Activated CD4-positive, alpha-beta T cell treated with anti-CD3 and anti-CD28 coated beads, Interleukin-2, amount 10 ng/mL, durations not matched to agents 7 days and 5 days (primary cell): ENCODE measurements at regions of chr17 and their contacts with region 1.

Region 1: GRCh38 chr17:59786536-59787319 is 79.3 kb downstream of the VMP1 start:
- DNase-seq: peak; percentile 92
- H3K4me3 Mint-ChIP-seq: peak overlapping the region; percentile 73
- H3K27ac Mint-ChIP-seq: peak overlapping the region; percentile 93
- H3K4me1 Mint-ChIP-seq: peaks cover 63% of the 10 kb centered on the region
- H3K27me3 Mint-ChIP-seq: no peaks in the 10 kb centered on the region

Region 2: DNA sequence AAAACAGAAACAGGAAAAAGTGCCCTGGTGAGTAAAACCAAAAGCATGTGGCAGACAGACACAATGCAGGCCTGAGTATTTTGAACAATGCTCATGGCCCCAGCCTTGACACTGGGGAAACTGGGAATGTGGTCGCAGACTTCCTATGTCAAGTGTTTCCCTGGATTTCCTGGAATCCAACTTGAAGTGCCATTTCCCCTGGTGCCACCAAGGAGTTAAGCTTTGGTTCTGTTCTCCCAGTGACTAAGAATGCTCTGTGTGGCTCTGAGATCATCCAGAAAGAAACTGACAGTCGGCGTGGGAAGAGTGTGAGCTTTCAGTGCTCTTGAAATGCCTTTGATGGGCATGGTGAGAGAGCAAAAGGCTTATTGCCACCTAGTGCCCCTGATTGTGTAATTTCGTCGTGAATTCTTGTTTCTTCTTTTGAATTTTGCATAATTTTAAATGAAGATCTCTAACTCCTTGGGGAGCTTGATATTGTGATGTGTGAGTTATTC is 359.3 kb before region 1 on chr17:
- CTCF ChIA-PET with region 1: no interaction called
- POLR2A ChIA-PET with region 1: no interaction called
- DNase-seq: peak; percentile 18
- H3K4me3 Mint-ChIP-seq: no peak overlapping the region
- H3K27ac Mint-ChIP-seq: no peak overlapping the region
- H3K4me1 Mint-ChIP-seq: peaks cover 18% of the 10 kb centered on the region
- H3K27me3 Mint-ChIP-seq: peaks cover 4% of the 10 kb centered on the region

Region 3: GRCh38 chr17:59769891-59770290 is 16.8 kb before region 1 on chr17:
- CTCF ChIA-PET with region 1: interaction called, 18 read pairs
- POLR2A ChIA-PET with region 1: interaction called, 4 read pairs
- DNase-seq: no peak
- H3K4me3 Mint-ChIP-seq: no peak overlapping the region
- H3K27ac Mint-ChIP-seq: no peak overlapping the region
- H3K4me1 Mint-ChIP-seq: peaks cover 36% of the 10 kb centered on the region
- H3K27me3 Mint-ChIP-seq: no peaks in the 10 kb centered on the region

Region 4: DNA sequence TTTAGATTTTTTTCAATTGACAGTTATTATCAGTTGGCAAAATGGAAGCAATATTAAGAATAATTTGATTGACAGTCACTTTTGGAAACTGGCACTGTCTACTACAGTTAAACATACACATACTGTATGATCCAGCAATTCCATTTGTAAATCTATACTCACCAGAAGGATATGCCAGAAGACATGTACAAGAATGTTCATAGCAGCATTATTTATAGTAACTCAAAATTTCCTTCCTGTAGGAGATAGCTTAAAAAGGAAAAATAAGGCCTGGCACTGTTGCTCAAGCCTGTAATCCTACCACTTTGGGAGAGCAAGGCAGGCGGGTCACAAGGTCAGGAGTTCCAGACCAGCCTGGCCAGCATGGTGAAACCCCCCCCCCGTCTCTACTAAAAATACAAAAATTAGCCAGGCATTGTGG is 10.1 kb after region 1 on chr17:
- CTCF ChIA-PET with region 1: interaction called, 13 read pairs
- POLR2A ChIA-PET with region 1: no interaction called
- DNase-seq: no peak
- H3K4me3 Mint-ChIP-seq: no peak overlapping the region
- H3K27ac Mint-ChIP-seq: peak overlapping the region; percentile 36
- H3K4me1 Mint-ChIP-seq: peaks cover 32% of the 10 kb centered on the region
- H3K27me3 Mint-ChIP-seq: no peaks in the 10 kb centered on the region

Region 5: GRCh38 chr17:59829217-59830006 is 42.7 kb after region 1 on chr17:
- CTCF ChIA-PET with region 1: interaction called, 7 read pairs
- POLR2A ChIA-PET with region 1: interaction called, 27 read pairs
- DNase-seq: peak; percentile 59
- H3K4me3 Mint-ChIP-seq: peak overlapping the region; percentile 71
- H3K27ac Mint-ChIP-seq: peak overlapping the region; percentile 96
- H3K4me1 Mint-ChIP-seq: peaks cover 83% of the 10 kb centered on the region
- H3K27me3 Mint-ChIP-seq: no peaks in the 10 kb centered on the region

Region 6: DNA sequence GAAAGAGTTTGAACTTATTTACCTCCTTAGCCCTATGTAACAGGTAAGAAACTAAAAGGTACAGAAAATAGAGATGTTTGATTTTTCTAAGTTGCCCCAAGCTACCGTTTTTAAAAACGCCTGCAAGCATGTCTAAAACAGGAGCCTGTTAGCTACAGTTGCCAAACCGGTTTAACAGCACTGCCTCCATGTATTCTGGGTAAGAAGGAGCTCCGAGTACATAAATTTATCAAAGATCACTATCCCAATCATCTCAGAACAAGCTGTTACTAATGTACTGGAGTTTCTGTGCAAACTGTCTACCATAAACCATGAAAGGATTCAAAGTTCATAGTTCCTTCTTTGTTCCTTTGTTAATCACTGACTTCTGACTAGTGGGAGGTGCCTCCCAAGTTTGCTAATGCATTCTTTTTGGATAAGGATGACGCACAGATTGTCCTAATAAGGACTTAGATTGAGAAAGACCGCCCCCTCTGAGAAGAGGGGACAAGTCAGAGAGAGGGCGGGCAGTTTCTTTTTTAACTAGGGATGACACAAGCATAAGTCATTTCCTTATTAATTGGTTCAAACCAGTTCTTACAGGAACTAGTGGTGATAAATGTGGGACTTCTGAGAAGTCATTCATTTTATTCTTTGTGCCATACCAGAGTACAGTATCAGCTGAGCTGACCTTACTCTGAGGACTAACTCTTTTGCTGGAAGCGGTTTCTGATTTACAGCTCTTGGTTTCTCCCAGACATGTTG is 50.8 kb after region 1 on chr17:
- CTCF ChIA-PET with region 1: interaction called, 15 read pairs
- POLR2A ChIA-PET with region 1: interaction called, 120 read pairs
- DNase-seq: peak; percentile 91
- H3K4me3 Mint-ChIP-seq: peak overlapping the region; percentile 93
- H3K27ac Mint-ChIP-seq: peak overlapping the region; percentile 98
- H3K4me1 Mint-ChIP-seq: peaks cover 45% of the 10 kb centered on the region
- H3K27me3 Mint-ChIP-seq: no peaks in the 10 kb centered on the region

Region 7: GRCh38 chr17:59863606-59864005 is 76.9 kb after region 1 on chr17:
- CTCF ChIA-PET with region 1: no interaction called
- POLR2A ChIA-PET with region 1: no interaction called
- DNase-seq: no peak
- H3K4me3 Mint-ChIP-seq: no peak overlapping the region
- H3K27ac Mint-ChIP-seq: no peak overlapping the region
- H3K4me1 Mint-ChIP-seq: peaks cover 10% of the 10 kb centered on the region
- H3K27me3 Mint-ChIP-seq: no peaks in the 10 kb centered on the region

Region 8: GRCh38 chr17:59954856-59955255 is 168.1 kb after region 1 on chr17:
- CTCF ChIA-PET with region 1: no interaction called
- POLR2A ChIA-PET with region 1: no interaction called
- DNase-seq: no peak
- H3K4me3 Mint-ChIP-seq: no peak overlapping the region
- H3K27ac Mint-ChIP-seq: no peak overlapping the region
- H3K4me1 Mint-ChIP-seq: peaks cover 5% of the 10 kb centered on the region
- H3K27me3 Mint-ChIP-seq: no peaks in the 10 kb centered on the region